Panc1 (cell line): ENCODE measurements at regions of chr17 and their contacts with region 1.

Region 1: GRCh38 chr17:74552037-74552436 is 6.1 kb upstream of the CD300C start:
- DNase-seq: no peak
- ATAC-seq: no peak
- H3K4me3 ChIP-seq: no peak overlapping the region
- H3K27ac ChIP-seq: no peak overlapping the region
- H3K4me1 ChIP-seq: no peaks in the 10 kb centered on the region
- H3K27me3 ChIP-seq: no peaks in the 10 kb centered on the region
- CTCF ChIP-seq: no peak

Region 2: GRCh38 chr17:74639704-74640151 is 87.7 kb after region 1 on chr17:
- CTCF ChIA-PET with region 1: no interaction called
- POLR2A ChIA-PET with region 1: no interaction called
- in situ Hi-C with region 1: no loop called
- intact Hi-C with region 1: loop called (anchors 5 kb)
- DNase-seq: no peak
- ATAC-seq: no peak
- H3K4me3 ChIP-seq: no peak overlapping the region
- H3K27ac ChIP-seq: no peak overlapping the region
- H3K4me1 ChIP-seq: no peaks in the 10 kb centered on the region
- H3K27me3 ChIP-seq: peaks cover 23% of the 10 kb centered on the region
- CTCF ChIP-seq: no peak